ENCODE measurements at regions of chr1 and their contacts with region 1.

Region 1: GRCh38 chr1:163174524-163175437 is 27.9 kb downstream of the RGS5 start:
- DNase-seq: peak in 10 of 14 experiments; percentile 1 to 41 (median 12)
- ATAC-seq: no peak
- H3K4me3 ChIP-seq: no peak overlapping the region
- H3K4me3 Mint-ChIP-seq: no peak overlapping the region
- H3K27ac ChIP-seq: no peak overlapping the region
- H3K27ac Mint-ChIP-seq: no peak overlapping the region
- H3K4me1 ChIP-seq: no peaks in the 10 kb centered on the region
- H3K4me1 Mint-ChIP-seq: no peaks in the 10 kb centered on the region
- H3K27me3 ChIP-seq: no peaks in the 10 kb centered on the region
- H3K27me3 Mint-ChIP-seq: peaks cover 10% of the 10 kb centered on the region
- CTCF ChIP-seq: peak; percentile 57

Region 2: DNA sequence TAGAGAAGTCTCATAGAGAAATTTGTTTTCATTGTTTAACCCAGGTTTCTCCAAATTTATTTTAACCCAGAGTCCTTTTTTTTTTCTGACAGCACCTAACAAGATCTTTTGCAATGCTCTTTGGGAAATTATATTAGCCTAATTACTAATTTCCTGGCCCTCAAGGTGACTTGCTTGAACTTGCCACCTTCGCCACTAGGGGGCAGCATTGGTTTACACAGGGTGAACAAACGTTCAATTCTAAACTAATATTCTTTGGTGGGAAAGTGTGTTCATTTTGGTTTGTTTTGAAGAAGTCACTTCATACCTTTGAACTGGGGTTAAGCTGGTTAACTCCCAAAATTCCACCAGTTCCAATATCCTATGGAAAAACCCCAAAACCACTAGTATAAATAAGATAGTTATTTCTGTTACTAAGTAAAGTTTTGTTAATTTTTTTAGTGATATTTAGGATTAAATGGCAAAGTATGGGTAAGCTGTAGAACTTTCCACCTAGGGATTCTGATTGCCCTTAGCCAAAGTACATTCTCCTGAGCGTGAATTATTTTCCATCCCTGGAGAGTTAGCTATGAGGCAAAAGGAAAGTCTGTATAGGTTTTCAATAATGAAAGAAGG is 326.8 kb before region 1 on chr1:
- CTCF ChIA-PET with region 1: no interaction called
- POLR2A ChIA-PET with region 1: no interaction called
- intact Hi-C with region 1: loop called (anchors 5 kb)
- DNase-seq: peak; percentile 62 to 89 (median 77)
- ATAC-seq: peak; percentile 29
- H3K4me3 ChIP-seq: no peak overlapping the region
- H3K4me3 Mint-ChIP-seq: no peak overlapping the region
- H3K27ac ChIP-seq: no peak overlapping the region
- H3K27ac Mint-ChIP-seq: no peak overlapping the region
- H3K4me1 ChIP-seq: no peaks in the 10 kb centered on the region
- H3K4me1 Mint-ChIP-seq: no peaks in the 10 kb centered on the region
- H3K27me3 ChIP-seq: peaks cover 0 to 2% of the 10 kb centered on the region in 2 experiments
- H3K27me3 Mint-ChIP-seq: peaks cover 28% of the 10 kb centered on the region
- CTCF ChIP-seq: peak; percentile 93